Activated B cell treated with CpG ODN at 0.5 μM for 24 hours (primary cell): ENCODE measurements at regions of chr7 and their contacts with region 1.

Region 1: DNA sequence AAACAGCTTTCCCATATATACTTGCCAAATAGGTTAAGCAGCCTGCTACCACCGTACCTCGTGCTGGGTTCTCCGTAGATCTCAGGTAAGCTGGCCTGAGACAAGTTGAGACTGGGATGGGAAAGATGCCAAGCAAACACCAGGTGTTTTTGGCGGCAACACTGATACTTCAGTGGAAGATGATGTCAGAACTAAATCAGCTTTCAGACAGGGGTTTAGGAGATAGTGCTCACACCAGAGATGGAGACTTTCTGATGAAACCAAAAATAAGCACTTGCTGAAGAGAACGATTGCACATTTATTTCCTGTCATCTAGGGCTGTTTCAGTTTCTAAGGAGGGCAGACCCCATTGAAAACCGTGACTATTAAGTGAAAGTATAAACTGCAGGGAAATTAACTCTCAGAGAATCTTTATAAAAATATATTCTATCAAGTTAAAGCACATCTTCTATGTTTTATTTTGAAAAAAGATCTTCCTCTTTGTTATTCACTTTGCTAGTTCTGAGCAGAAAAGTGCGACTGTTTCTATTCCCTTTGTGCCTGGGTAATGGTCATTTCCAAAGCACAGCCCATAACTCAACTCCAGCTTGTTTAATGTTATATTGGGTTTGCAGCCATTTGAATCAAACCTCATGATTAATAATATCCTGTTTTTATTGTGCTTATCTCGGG is 149.9 kb downstream of the CPED1 start:
- DNase-seq: peak; percentile 26
- ATAC-seq: peak; percentile 96
- H3K4me3 Mint-ChIP-seq: peak overlapping the region; percentile 94
- H3K27ac Mint-ChIP-seq: peak overlapping the region; percentile 96
- H3K4me1 Mint-ChIP-seq: peaks cover 30% of the 10 kb centered on the region
- H3K27me3 Mint-ChIP-seq: no peaks in the 10 kb centered on the region
- CTCF ChIP-seq: no peak

Region 2: GRCh38 chr7:120950539-120951308 is 187.7 kb before region 1 on chr7 and contains the start of gene ING3:
- CTCF ChIA-PET with region 1: no interaction called
- POLR2A ChIA-PET with region 1: interaction called, 12 read pairs
- intact Hi-C with region 1: no loop called
- DNase-seq: peak; percentile 99
- ATAC-seq: peak; percentile 89
- H3K4me3 Mint-ChIP-seq: peak within 1 kb of the TSS; percentile 95
- H3K27ac Mint-ChIP-seq: peak within 1 kb of the TSS; percentile 99
- H3K4me1 Mint-ChIP-seq: peaks cover 26% of the 10 kb centered on the region
- H3K27me3 Mint-ChIP-seq: peaks cover 3% of the 10 kb centered on the region
- CTCF ChIP-seq: no peak
- total RNA-seq, gene ING3: 32.7 and 36.1 TPM in 2 replicates

Region 3: DNA sequence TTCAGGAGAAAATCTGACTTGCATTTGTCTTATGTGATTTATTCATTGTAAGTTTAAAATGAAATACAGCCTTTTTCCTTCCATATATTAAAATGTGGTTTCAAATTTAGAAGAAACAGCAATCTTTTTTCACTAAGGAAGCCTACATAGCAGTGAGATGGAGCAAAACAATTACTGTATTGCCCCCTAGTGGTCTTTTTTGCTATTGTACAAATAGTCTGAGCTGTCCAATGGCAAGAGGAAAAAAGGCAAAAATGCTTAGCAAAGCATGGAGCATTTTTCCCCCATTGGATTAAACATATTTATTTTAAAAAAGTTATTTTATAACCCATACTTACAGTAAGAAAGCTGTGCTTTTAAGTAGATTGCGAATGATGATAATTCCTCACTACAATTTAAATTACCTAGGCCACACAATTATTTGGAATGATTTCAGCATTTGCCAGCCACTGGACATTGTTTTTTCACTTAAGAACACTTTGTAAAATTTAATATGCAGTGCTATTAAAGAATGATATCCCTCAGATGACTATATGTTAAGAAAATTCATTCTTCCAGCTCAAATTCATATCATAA is 30.4 kb before region 1 on chr7:
- CTCF ChIA-PET with region 1: no interaction called
- POLR2A ChIA-PET with region 1: no interaction called
- intact Hi-C with region 1: no loop called
- DNase-seq: no peak
- ATAC-seq: peak; percentile 77
- H3K4me3 Mint-ChIP-seq: no peak overlapping the region
- H3K27ac Mint-ChIP-seq: no peak overlapping the region
- H3K4me1 Mint-ChIP-seq: no peaks in the 10 kb centered on the region
- H3K27me3 Mint-ChIP-seq: no peaks in the 10 kb centered on the region
- CTCF ChIP-seq: peak; percentile 83

Region 4: GRCh38 chr7:121126801-121127534 is 11.4 kb before region 1 on chr7:
- CTCF ChIA-PET with region 1: no interaction called
- POLR2A ChIA-PET with region 1: interaction called, 3 read pairs
- intact Hi-C with region 1: loop called (anchors 1 kb)
- DNase-seq: no peak
- ATAC-seq: no peak
- H3K4me3 Mint-ChIP-seq: no peak overlapping the region
- H3K27ac Mint-ChIP-seq: no peak overlapping the region
- H3K4me1 Mint-ChIP-seq: peaks cover 18% of the 10 kb centered on the region
- H3K27me3 Mint-ChIP-seq: no peaks in the 10 kb centered on the region
- CTCF ChIP-seq: no peak

Region 5: GRCh38 chr7:121153995-121154394 is 15.6 kb after region 1 on chr7:
- CTCF ChIA-PET with region 1: no interaction called
- POLR2A ChIA-PET with region 1: no interaction called
- intact Hi-C with region 1: loop called (anchors 2 kb)
- DNase-seq: no peak
- ATAC-seq: no peak
- H3K4me3 Mint-ChIP-seq: no peak overlapping the region
- H3K27ac Mint-ChIP-seq: no peak overlapping the region
- H3K4me1 Mint-ChIP-seq: peaks cover 13% of the 10 kb centered on the region
- H3K27me3 Mint-ChIP-seq: no peaks in the 10 kb centered on the region
- CTCF ChIP-seq: no peak

Region 6: DNA sequence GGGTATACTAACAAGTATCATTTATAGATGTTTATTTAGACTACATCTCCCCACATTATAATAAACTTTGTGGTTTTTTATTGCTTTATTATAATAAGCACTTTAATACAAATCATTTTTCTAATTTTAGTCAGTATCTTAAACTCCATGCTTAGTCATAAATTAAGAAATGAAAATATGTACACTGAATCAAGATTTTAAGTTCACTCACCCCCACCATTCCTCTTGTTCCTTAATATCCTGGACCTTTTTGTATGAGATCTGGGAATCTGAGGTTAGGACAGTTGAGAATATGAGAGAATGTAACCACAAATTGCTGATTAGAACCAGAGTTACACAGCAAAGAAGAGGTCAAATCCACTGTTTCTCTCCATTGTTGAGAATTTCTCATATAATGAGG is 96.8 kb after region 1 on chr7:
- CTCF ChIA-PET with region 1: no interaction called
- POLR2A ChIA-PET with region 1: no interaction called
- intact Hi-C with region 1: no loop called
- DNase-seq: no peak
- ATAC-seq: no peak
- H3K4me3 Mint-ChIP-seq: no peak overlapping the region
- H3K27ac Mint-ChIP-seq: no peak overlapping the region
- H3K4me1 Mint-ChIP-seq: no peaks in the 10 kb centered on the region
- H3K27me3 Mint-ChIP-seq: no peaks in the 10 kb centered on the region
- CTCF ChIP-seq: no peak

Region 7: GRCh38 chr7:121271916-121272315 is 133.5 kb after region 1 on chr7:
- CTCF ChIA-PET with region 1: no interaction called
- POLR2A ChIA-PET with region 1: no interaction called
- intact Hi-C with region 1: no loop called
- DNase-seq: no peak
- ATAC-seq: no peak
- H3K4me3 Mint-ChIP-seq: no peak overlapping the region
- H3K27ac Mint-ChIP-seq: no peak overlapping the region
- H3K4me1 Mint-ChIP-seq: peaks cover 35% of the 10 kb centered on the region
- H3K27me3 Mint-ChIP-seq: no peaks in the 10 kb centered on the region
- CTCF ChIP-seq: no peak

Region 8: DNA sequence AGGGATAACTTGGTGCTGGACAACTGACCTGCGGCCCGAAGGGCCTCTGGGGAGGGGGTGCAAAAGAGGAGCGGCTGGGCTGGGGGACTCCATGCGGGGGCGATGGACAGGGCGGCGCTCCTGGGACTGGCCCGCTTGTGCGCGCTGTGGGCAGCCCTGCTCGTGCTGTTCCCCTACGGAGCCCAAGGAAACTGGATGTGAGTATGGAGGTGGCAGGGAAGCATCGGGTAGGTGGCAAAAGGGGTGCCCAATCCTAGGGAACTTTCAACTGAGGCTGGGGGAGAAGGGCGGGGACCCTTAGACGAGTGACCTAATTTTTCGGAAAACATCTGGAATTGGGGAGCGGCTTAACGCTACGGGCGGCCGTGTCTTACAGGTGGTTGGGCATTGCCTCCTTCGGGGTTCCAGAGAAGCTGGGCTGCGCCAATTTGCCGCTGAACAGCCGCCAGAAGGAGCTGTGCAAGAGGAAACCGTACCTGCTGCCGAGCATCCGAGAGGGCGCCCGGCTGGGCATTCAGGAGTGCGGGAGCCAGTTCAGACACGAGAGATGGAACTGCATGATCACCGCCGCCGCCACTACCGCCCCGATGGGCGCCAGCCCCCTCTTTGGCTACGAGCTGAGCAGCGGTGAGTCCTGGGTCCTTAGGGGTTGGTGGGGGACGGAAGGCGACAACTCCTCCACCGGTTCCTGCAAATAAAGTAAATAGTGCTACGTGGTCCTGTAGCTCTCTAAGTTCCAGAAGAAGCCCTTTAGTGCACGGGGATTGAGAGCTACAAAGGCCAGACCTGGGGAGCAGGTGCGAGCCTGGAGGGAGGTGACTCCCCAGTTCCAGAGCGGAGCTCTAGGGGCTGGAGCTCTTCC is 191.0 kb after region 1 on chr7:
- CTCF ChIA-PET with region 1: no interaction called
- POLR2A ChIA-PET with region 1: interaction called, 5 read pairs
- intact Hi-C with region 1: loop called (anchors 1 kb)
- DNase-seq: peak; percentile 43
- ATAC-seq: peak; percentile 49
- H3K4me3 Mint-ChIP-seq: peak overlapping the region; percentile 91
- H3K27ac Mint-ChIP-seq: peak overlapping the region; percentile 85
- H3K4me1 Mint-ChIP-seq: peaks cover 36% of the 10 kb centered on the region
- H3K27me3 Mint-ChIP-seq: peaks cover 11% of the 10 kb centered on the region
- CTCF ChIP-seq: no peak

Region 9: GRCh38 chr7:123054357-123055130 is 1916.1 kb after region 1 on chr7:
- CTCF ChIA-PET with region 1: no interaction called
- POLR2A ChIA-PET with region 1: no interaction called
- intact Hi-C with region 1: no loop called
- DNase-seq: no peak
- ATAC-seq: no peak
- H3K4me3 Mint-ChIP-seq: no peak overlapping the region
- H3K27ac Mint-ChIP-seq: no peak overlapping the region
- H3K4me1 Mint-ChIP-seq: no peaks in the 10 kb centered on the region
- H3K27me3 Mint-ChIP-seq: no peaks in the 10 kb centered on the region
- CTCF ChIP-seq: no peak